ENCODE measurements at regions of chr17 and their contacts with region 1.

Region 1: DNA sequence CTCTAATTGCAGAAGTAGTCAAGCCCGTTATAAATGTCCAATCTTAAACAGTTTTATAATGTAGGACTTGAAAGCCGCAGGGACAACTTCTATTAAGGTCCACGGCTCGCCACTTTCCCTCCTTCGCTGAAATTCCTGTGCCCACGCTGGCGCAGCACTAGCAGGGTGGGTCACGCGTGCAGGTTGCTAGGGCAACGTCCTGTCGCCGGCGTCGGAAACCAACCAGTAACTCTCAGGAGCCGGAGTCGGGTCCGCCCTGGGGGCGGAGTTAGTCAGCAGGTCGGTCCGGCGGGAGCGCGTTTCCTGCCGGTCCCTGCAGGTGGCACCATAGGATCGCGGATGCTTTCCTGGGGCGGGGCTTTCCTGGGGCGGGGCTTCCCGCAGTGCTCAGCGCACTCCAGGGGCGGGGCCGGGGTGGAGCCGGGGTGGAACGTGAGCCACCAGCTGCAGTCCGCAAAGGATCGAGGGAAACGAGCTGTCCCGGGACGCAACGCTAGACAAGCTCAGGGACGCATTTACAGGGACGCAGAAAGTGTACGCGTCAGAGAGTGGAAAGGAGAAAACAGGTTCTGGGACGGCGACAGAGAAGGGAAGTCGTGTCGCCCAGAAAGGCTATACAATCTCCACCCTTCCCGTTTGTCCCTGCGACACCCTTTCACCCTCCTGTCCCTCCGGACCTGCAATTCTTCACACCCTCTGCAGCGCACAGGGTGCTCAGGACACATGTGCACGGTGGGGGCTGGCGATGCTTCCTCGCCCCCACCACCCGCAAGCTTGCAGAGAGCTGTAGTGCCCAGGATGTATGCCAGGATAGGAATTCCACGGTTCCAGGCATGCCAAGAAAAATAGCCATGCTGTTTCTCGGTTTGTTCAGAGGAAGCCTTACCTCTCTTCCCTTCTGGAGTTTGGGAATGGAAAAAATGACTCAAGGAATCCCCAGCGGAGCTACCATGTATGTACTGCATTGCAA is 12.4 kb downstream of the COPZ2 start:
- DNase-seq: peak; percentile 99
- ATAC-seq: peak; percentile 63
- H3K4me3 ChIP-seq: peak overlapping the region; percentile 72
- H3K27ac ChIP-seq: peak overlapping the region; percentile 88
- H3K4me1 ChIP-seq: peaks cover 41% of the 10 kb centered on the region
- H3K27me3 ChIP-seq: no peaks in the 10 kb centered on the region
- CTCF ChIP-seq: peak; percentile 87

Region 2: GRCh38 chr17:48047741-48048383 is 22.6 kb after region 1 on chr17 and contains the start of gene NFE2L1:
- CTCF ChIA-PET with region 1: interaction called, 42 read pairs
- POLR2A ChIA-PET with region 1: interaction called, 8 read pairs
- intact Hi-C with region 1: loop called (anchors 1 kb)
- DNase-seq: peak; percentile 100
- ATAC-seq: peak; percentile 89
- H3K4me3 ChIP-seq: peak within 1 kb of the TSS; percentile 69
- H3K27ac ChIP-seq: peak within 1 kb of the TSS; percentile 92
- H3K4me1 ChIP-seq: peaks cover 60% of the 10 kb centered on the region
- H3K27me3 ChIP-seq: no peaks in the 10 kb centered on the region
- CTCF ChIP-seq: no peak
- total RNA-seq, gene NFE2L1: 45.1 and 72.6 TPM in 2 replicates

Region 3: GRCh38 chr17:48101012-48101720 is 75.9 kb after region 1 on chr17 and contains the start of gene CBX1:
- CTCF ChIA-PET with region 1: interaction called, 4 read pairs
- POLR2A ChIA-PET with region 1: interaction called, 3 read pairs
- intact Hi-C with region 1: loop called (anchors 2 kb)
- DNase-seq: peak; percentile 96
- ATAC-seq: peak; percentile 95
- H3K4me3 ChIP-seq: peak within 1 kb of the TSS; percentile 78
- H3K27ac ChIP-seq: peak within 1 kb of the TSS; percentile 67
- H3K4me1 ChIP-seq: peaks cover 10% of the 10 kb centered on the region
- H3K27me3 ChIP-seq: no peaks in the 10 kb centered on the region
- CTCF ChIP-seq: no peak
- total RNA-seq, gene CBX1: 119 and 142 TPM in 2 replicates

Region 4: GRCh38 chr17:48131216-48131824 is 106.1 kb after region 1 on chr17:
- CTCF ChIA-PET with region 1: interaction called, 8 read pairs
- POLR2A ChIA-PET with region 1: no interaction called
- intact Hi-C with region 1: loop called (anchors 1 kb)
- DNase-seq: peak; percentile 96
- ATAC-seq: peak; percentile 87
- H3K4me3 ChIP-seq: no peak overlapping the region
- H3K27ac ChIP-seq: no peak overlapping the region
- H3K4me1 ChIP-seq: peaks cover 15% of the 10 kb centered on the region
- H3K27me3 ChIP-seq: no peaks in the 10 kb centered on the region
- CTCF ChIP-seq: peak; percentile 97

Region 5: GRCh38 chr17:48241131-48241591 is 215.9 kb after region 1 on chr17:
- CTCF ChIA-PET with region 1: no interaction called
- POLR2A ChIA-PET with region 1: no interaction called
- intact Hi-C with region 1: loop called (anchors 10 kb)
- DNase-seq: peak; percentile 87
- ATAC-seq: peak; percentile 29; the same call in 1 of the 2 replicates
- H3K4me3 ChIP-seq: no peak overlapping the region
- H3K27ac ChIP-seq: peak overlapping the region; percentile 89
- H3K4me1 ChIP-seq: peaks cover 94% of the 10 kb centered on the region
- H3K27me3 ChIP-seq: no peaks in the 10 kb centered on the region
- CTCF ChIP-seq: no peak

Region 6: GRCh38 chr17:48483471-48484131 is 458.4 kb after region 1 on chr17:
- CTCF ChIA-PET with region 1: no interaction called
- POLR2A ChIA-PET with region 1: no interaction called
- intact Hi-C with region 1: loop called (anchors 10 kb)
- DNase-seq: peak; percentile 99
- ATAC-seq: peak; percentile 88
- H3K4me3 ChIP-seq: peak overlapping the region; percentile 22; the same call in 1 of the 2 replicates
- H3K27ac ChIP-seq: peak overlapping the region; percentile 97
- H3K4me1 ChIP-seq: peaks cover 59% of the 10 kb centered on the region
- H3K27me3 ChIP-seq: no peaks in the 10 kb centered on the region
- CTCF ChIP-seq: no peak

Measured in PC-3 (cell line).